Activated CD8-positive, alpha-beta T cell treated with anti-CD3 and anti-CD28 coated beads, Interleukin-2, amount 10 ng/mL, durations not matched to agents 7 days and 5 days (primary cell): ENCODE measurements at regions of chr22 and their contacts with region 1.

Region 1: GRCh38 chr22:22720201-22720723 is 75.8 kb downstream of the GGTLC2 start:
- DNase-seq: peak; percentile 68
- ATAC-seq: peak; percentile 85
- H3K4me3 Mint-ChIP-seq: no peak overlapping the region
- H3K27ac Mint-ChIP-seq: peak overlapping the region; percentile 42
- H3K4me1 Mint-ChIP-seq: peaks cover 30% of the 10 kb centered on the region
- H3K27me3 Mint-ChIP-seq: peaks cover 16% of the 10 kb centered on the region

Region 2: GRCh38 chr22:22487869-22488597 is 232.2 kb before region 1 on chr22:
- CTCF ChIA-PET with region 1: no interaction called
- POLR2A ChIA-PET with region 1: no interaction called
- DNase-seq: no peak
- ATAC-seq: no peak
- H3K4me3 Mint-ChIP-seq: no peak overlapping the region
- H3K27ac Mint-ChIP-seq: no peak overlapping the region
- H3K4me1 Mint-ChIP-seq: no peaks in the 10 kb centered on the region
- H3K27me3 Mint-ChIP-seq: no peaks in the 10 kb centered on the region

Region 3: GRCh38 chr22:22702237-22703202 is 17.7 kb before region 1 on chr22:
- CTCF ChIA-PET with region 1: interaction called, 15 read pairs
- POLR2A ChIA-PET with region 1: no interaction called
- DNase-seq: no peak
- ATAC-seq: no peak
- H3K4me3 Mint-ChIP-seq: no peak overlapping the region
- H3K27ac Mint-ChIP-seq: no peak overlapping the region
- H3K4me1 Mint-ChIP-seq: peaks cover 9% of the 10 kb centered on the region
- H3K27me3 Mint-ChIP-seq: peaks cover 2% of the 10 kb centered on the region